Activated B cell treated with CpG ODN at 0.5 μM for 24 hours (primary cell): ENCODE measurements at regions of chr7 and their contacts with region 1.

Region 1: DNA sequence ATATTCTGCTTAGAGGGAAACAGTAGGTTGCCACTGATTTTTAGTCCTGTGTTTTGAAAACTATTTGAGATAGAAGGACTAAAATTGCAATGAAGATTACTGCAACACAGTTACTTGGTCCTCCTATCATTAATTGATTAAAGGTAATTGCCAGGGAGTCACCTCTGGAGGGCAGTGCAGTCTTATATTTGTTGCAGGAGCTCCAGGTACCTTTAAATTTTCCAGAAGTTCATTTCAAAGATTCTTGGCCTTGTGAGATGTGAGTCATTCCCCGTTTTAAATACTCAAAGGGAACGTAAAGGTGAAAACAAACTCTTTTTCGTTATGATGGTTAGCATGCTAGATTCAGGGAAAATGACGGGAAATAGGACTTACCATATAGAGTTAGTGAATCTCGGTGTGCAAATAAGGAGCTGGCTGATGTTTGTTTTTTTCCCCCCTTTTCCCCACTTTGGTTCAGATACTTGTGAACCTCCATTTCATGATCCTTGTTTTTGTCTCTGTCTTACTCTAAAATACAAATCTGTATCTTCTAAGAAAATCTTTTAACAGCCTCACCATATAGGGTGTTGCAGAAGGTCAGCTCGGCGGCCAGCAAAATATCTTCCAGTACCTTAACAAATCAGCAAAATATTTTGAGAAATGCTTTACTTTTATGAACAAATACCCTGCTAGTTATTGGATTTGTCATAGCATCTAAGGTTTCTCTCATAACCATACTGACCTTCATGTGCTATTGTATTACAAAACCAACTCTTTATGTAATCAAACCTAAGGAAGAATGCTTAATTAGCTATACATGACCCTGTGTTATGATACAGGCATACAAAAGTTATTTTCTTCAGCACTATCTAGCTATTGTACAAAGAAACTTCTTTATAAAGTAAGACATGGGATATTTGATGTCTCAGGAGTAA is 143.0 kb upstream of the HDAC9 start:
- DNase-seq: no peak
- ATAC-seq: peak; percentile 73
- H3K4me3 Mint-ChIP-seq: no peak overlapping the region
- H3K27ac Mint-ChIP-seq: no peak overlapping the region
- H3K4me1 Mint-ChIP-seq: peaks cover 28% of the 10 kb centered on the region
- H3K27me3 Mint-ChIP-seq: no peaks in the 10 kb centered on the region
- CTCF ChIP-seq: peak; percentile 81

Region 2: DNA sequence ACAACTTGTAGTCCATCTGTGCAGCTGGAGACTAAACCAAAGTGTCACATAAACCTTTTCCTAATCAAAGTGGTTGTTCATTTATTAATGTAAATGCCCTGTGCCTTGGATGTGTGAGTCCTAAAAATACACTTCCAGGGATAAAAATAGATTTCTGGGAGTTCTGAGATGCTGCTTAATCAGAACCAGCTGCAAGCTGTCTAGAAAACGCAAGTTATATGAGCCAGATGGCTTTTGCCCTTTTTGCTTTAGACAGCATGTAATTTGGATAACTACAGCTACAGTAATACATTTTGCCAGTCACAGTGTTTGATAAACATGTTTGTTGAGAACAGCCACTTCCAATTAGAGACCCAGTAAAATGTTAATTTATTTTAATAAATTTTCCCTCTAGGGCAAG is 139.8 kb before region 1 on chr7:
- CTCF ChIA-PET with region 1: interaction called, 147 read pairs
- POLR2A ChIA-PET with region 1: no interaction called
- intact Hi-C with region 1: no loop called
- DNase-seq: no peak
- ATAC-seq: no peak
- H3K4me3 Mint-ChIP-seq: no peak overlapping the region
- H3K27ac Mint-ChIP-seq: no peak overlapping the region
- H3K4me1 Mint-ChIP-seq: peaks cover 8% of the 10 kb centered on the region
- H3K27me3 Mint-ChIP-seq: no peaks in the 10 kb centered on the region
- CTCF ChIP-seq: no peak

Region 3: DNA sequence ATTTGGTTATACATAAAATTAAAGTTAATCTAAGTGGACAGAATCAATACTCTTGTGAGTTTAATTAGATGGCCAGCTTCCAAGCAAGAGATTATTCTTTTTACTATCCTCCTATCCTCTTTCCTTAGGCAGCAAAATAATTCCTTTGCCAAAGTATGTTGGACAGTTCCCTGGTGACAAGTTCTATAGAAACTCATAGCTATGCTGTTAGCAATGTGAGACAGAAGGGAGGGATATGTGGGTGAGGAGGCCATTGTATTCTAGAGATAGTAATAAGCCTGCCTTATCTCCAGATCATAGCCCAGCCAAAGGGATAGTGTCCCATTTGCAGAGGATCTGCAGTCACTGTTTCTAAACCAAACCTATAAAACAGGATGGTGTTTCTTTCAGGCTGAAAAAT is 38.6 kb before region 1 on chr7:
- CTCF ChIA-PET with region 1: no interaction called
- POLR2A ChIA-PET with region 1: no interaction called
- intact Hi-C with region 1: no loop called
- DNase-seq: no peak
- ATAC-seq: no peak
- H3K4me3 Mint-ChIP-seq: no peak overlapping the region
- H3K27ac Mint-ChIP-seq: no peak overlapping the region
- H3K4me1 Mint-ChIP-seq: peaks cover 51% of the 10 kb centered on the region
- H3K27me3 Mint-ChIP-seq: no peaks in the 10 kb centered on the region
- CTCF ChIP-seq: no peak

Region 4: DNA sequence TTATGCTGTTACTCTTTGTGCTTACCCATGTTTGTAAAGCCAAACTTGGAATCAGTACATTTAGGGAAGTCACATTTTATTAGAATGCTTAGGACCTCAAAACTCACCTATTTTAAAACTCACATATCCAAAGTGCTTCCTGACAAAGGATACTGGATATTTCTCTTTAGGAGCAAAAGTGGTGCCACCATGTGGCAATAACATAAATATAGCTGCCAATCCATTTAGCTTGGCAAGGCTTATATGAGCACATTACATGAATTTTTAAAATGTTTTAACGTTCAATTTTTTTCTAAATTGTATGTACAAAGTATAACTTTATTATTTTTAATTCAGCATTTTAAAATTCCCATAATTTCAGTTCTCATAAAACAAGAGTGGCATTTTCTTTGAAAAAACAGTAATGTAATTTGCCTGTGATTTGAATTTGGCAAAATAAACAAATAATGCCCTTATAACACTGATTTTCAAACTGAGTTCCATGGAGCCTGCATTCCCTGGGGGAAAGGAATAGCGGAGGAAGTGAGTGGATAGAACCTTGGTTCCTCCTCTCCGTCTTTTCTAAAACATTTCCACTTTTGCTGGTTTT is 218.4 kb after region 1 on chr7:
- CTCF ChIA-PET with region 1: interaction called, 15 read pairs
- POLR2A ChIA-PET with region 1: no interaction called
- intact Hi-C with region 1: loop called (anchors 1 kb)
- DNase-seq: no peak
- ATAC-seq: no peak
- H3K4me3 Mint-ChIP-seq: no peak overlapping the region
- H3K27ac Mint-ChIP-seq: peak overlapping the region; percentile 50
- H3K4me1 Mint-ChIP-seq: peaks cover 71% of the 10 kb centered on the region
- H3K27me3 Mint-ChIP-seq: no peaks in the 10 kb centered on the region
- CTCF ChIP-seq: no peak

Region 5: GRCh38 chr7:18666107-18666728 is 313.6 kb after region 1 on chr7:
- CTCF ChIA-PET with region 1: interaction called, 186 read pairs
- POLR2A ChIA-PET with region 1: interaction called, 5 read pairs
- intact Hi-C with region 1: loop called (anchors 1 kb)
- DNase-seq: peak; percentile 55
- ATAC-seq: peak; percentile 94
- H3K4me3 Mint-ChIP-seq: no peak overlapping the region
- H3K27ac Mint-ChIP-seq: peak overlapping the region; percentile 10
- H3K4me1 Mint-ChIP-seq: peaks cover 9% of the 10 kb centered on the region
- H3K27me3 Mint-ChIP-seq: no peaks in the 10 kb centered on the region
- CTCF ChIP-seq: peak; percentile 99

Region 6: DNA sequence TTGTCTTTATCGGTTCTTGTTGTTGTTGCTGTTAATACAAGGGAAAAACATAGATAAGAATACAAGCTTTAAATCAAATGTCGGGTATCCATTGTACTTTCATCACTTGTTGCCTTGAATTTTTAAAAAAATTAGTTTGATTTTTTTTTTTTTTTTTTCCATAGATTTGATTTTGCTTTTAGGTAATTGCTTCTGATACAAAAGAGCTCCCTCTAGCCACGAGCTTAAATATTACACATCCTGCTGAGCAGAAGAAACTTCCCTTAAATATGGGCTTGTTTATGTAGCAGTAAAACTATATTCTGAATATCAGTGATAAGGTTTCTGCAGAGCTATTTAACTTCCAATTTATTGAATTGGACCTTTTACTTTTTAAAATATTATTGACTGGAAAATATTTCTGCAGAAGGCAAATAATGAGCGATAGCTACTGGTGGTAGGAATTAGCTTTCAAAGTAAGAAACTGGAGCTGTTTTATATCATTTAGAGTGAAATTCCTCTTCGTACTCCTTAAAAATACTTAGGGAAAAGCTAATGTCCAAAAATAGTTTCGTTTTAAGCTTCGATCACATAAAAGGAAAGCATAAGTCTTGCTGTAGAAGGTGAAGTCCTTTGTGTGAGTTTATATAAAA is 1139.3 kb after region 1 on chr7:
- CTCF ChIA-PET with region 1: interaction called, 9 read pairs
- POLR2A ChIA-PET with region 1: no interaction called
- intact Hi-C with region 1: loop called (anchors 5 kb)
- DNase-seq: no peak
- ATAC-seq: no peak
- H3K4me3 Mint-ChIP-seq: no peak overlapping the region
- H3K27ac Mint-ChIP-seq: no peak overlapping the region
- H3K4me1 Mint-ChIP-seq: no peaks in the 10 kb centered on the region
- H3K27me3 Mint-ChIP-seq: no peaks in the 10 kb centered on the region
- CTCF ChIP-seq: no peak